Right cardiac atrium (tissue), 5 donors: ENCODE measurements at regions of chr11 and their contacts with region 1.

Region 1: DNA sequence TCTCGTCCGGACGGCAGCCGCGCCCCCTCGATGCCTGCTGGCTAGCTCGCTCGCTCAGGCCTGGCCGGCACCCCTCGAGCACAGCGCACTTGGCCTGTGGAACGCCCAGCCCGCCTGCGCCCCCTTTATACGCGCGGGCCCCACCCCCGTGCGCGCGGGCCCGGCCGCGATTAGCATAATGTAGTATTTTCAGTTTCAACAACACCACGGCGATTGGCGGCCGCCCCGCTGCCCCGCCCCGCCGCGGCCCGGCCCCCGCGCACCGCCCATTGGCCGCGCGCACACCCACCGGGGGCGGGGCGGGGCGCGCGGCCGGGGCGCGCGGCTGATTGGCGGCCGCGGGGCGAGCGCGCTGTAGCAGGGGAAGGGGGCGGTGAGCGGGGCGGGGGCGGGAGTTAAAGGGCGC is at the start of gene CDKN1C:
- DNase-seq: peak; percentile 88 to 97 (median 96)
- ATAC-seq: peak; percentile 80 to 82
- H3K4me3 ChIP-seq: peak within 1 kb of the TSS; percentile 88
- H3K27ac ChIP-seq: peak within 1 kb of the TSS; percentile 62
- H3K4me1 ChIP-seq: peaks cover under 1% of the 10 kb centered on the region
- H3K27me3 ChIP-seq: no peaks in the 10 kb centered on the region
- total RNA-seq, gene CDKN1C: 16.1 to 26.3 (median 21.4) TPM

Region 2: DNA sequence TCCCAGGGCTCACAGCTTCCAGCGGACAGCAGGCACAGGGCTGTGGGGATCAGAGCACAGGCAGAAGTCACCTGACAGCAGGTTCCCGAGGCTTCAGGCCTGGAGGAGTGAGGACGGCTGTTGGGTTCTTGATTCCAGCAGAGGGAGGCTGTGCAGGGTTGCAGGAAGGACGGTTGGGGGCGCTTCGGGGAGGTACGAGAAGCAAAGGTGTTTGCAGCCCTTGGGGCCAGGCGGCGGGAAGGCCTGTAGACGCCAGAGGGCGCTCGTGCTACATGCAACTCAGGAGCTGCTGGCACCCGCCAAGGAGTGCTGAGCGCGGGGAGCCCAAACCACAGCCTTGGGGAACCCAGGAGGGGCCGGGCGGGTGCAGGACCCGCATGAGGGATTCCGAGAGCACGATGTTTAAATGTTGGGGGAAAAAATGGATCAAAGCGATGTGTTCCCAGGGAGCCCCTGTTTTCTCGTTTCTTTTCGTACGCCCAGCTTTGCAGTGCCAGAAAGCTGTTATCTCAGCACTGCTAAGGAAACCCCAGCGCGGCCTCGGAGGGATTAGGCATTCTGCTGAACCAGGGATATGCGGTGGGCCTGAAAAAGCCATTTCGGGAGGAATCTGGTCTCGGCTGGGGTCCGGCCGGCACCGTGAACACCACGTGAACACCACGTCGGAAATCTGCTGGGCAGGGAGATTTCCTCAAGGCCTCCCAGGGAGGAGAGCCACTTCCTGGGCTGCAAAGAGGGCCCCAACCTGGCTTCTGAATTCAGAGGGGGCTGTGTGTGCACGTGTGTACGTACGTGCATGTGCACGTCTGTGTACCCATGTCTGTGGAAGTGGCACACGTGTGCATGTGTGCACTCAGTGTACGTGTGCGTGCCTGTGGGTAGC is 352.7 kb before region 1 on chr11:
- intact Hi-C with region 1: loop called (anchors 1 to 2 kb)
- DNase-seq: peak; percentile 89 to 96 (median 95)
- ATAC-seq: peak; percentile 83 to 88
- H3K4me3 ChIP-seq: peak overlapping the region; percentile 3
- H3K27ac ChIP-seq: no peak overlapping the region
- H3K4me1 ChIP-seq: peaks cover 3% of the 10 kb centered on the region
- H3K27me3 ChIP-seq: no peaks in the 10 kb centered on the region

Region 3: GRCh38 chr11:2699531-2700414 is 185.9 kb before region 1 on chr11 and contains the start of gene KCNQ1OT1:
- intact Hi-C with region 1: loop called in 2 of 4 experiments (anchors 10 kb)
- DNase-seq: peak; percentile 91 to 96 (median 96)
- ATAC-seq: peak; percentile 96 to 97
- H3K4me3 ChIP-seq: peak within 1 kb of the TSS; percentile 59
- H3K27ac ChIP-seq: peak within 1 kb of the TSS; percentile 64
- H3K4me1 ChIP-seq: peaks cover under 1% of the 10 kb centered on the region
- H3K27me3 ChIP-seq: no peaks in the 10 kb centered on the region
- total RNA-seq, gene KCNQ1OT1: 0.51 to 0.78 (median 0.55) TPM

Region 4: DNA sequence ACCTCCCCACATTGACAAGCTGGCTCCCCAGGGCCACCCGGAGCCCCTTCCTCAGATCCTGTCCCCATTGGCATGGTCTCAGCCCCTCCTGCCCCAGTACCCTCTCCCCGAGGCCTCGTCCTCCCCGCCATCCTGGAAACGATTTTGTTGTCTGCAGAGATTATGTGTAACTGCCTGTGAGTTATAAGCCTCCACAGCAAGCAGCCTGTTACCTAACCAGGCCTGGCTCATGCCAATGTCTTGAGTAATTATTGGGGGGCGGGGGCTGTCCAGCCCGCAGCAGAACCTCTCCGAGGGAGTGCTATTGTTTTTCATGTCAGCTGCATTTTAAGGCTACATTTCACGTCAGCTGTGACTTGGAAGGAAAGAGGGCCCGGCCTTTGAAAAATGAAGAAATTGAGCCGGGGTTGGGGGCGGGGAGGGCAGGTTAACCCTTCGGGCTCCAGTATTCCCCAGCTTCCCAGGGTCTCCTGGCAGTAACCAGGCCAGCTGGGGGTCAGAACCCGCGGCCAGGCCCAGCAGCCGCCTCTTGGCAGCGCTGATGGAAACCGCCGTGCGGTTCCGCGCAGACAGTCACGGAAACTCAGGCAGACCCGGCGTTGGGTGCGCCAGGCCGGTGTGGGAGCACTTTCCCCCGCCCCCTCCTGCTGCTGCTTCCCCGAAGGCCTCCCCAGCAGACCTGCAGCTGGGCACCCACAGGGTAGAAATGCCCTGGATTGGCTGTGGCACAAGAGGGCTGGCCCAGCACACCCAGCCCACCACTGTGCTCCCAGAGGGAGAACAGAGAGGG is 59.6 kb before region 1 on chr11:
- intact Hi-C with region 1: loop called in 1 of 4 experiments (anchors 5 kb)
- DNase-seq: peak; percentile 77 to 90 (median 87)
- ATAC-seq: peak; percentile 84 to 88
- H3K4me3 ChIP-seq: no peak overlapping the region
- H3K27ac ChIP-seq: peak overlapping the region; percentile 88
- H3K4me1 ChIP-seq: peaks cover 4% of the 10 kb centered on the region
- H3K27me3 ChIP-seq: no peaks in the 10 kb centered on the region

Region 5: GRCh38 chr11:3222941-3223915 is 337.5 kb after region 1 on chr11:
- intact Hi-C with region 1: no loop called
- DNase-seq: no peak
- ATAC-seq: no peak
- H3K4me3 ChIP-seq: no peak overlapping the region
- H3K27ac ChIP-seq: no peak overlapping the region
- H3K4me1 ChIP-seq: no peaks in the 10 kb centered on the region
- H3K27me3 ChIP-seq: no peaks in the 10 kb centered on the region